Activated naive CD8-positive, alpha-beta T cell treated with anti-CD3 and anti-CD28 coated beads, Interleukin-2, amount 10 ng/mL, durations not matched to agents 7 days and 5 days (primary cell): ENCODE measurements at regions of chr11 and their contacts with region 1.

Region 1: GRCh38 chr11:68038718-68039525 is at the start of gene TCIRG1:
- DNase-seq: peak; percentile 77
- ATAC-seq: peak; percentile 54
- H3K4me3 Mint-ChIP-seq: peak within 1 kb of the TSS; percentile 97
- H3K27ac Mint-ChIP-seq: peak within 1 kb of the TSS; percentile 97
- H3K4me1 Mint-ChIP-seq: peaks cover 20% of the 10 kb centered on the region
- H3K27me3 Mint-ChIP-seq: no peaks in the 10 kb centered on the region
- total RNA-seq, gene TCIRG1: 297 to 308 TPM

Region 2: DNA sequence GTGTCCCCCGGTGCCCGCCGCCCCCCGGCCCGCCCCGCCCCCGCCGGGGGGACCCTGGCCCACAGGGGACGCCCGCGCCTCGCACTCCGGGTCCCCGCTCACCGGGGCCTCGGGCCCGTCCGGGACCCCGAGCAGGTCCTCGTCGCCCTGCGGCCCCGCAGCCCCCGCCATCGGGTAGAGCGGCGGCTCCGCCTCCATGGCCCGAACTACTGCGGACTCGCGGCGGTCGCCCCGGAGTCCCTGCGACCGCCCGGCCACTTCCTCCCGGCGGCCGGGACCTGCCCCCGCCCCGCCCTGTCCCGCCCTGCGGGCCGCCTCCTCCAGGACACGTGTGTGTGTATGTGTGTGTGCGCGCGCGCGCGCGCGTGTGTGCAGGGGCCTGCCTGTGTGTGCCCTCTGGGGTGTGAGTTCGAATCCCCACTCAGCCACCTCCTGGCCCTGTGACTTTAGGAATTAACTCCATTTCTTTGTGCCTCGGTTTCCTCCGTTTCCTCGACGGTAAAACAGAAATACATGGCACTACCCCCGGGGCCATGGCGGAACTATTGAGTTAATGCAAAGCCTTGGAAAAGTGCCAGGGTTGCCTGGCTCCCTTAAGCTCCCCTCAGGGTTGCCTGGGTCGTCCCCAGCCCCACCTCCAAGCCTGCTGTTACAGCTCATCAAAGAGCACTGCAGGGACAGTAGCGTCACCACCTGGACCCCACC is 34.9 kb before region 1 on chr11 and contains the start of gene UNC93B1:
- POLR2A ChIA-PET with region 1: interaction called, 12 read pairs
- DNase-seq: peak; percentile 90
- ATAC-seq: peak; percentile 88
- H3K4me3 Mint-ChIP-seq: peak within 1 kb of the TSS; percentile 89
- H3K27ac Mint-ChIP-seq: peak within 1 kb of the TSS; percentile 86
- H3K4me1 Mint-ChIP-seq: peaks cover 25% of the 10 kb centered on the region
- H3K27me3 Mint-ChIP-seq: no peaks in the 10 kb centered on the region
- total RNA-seq, gene UNC93B1: 35.1 to 42.6 TPM

Region 3: GRCh38 chr11:68051191-68052144 is 12.5 kb after region 1 on chr11:
- POLR2A ChIA-PET with region 1: interaction called, 10 read pairs
- DNase-seq: no peak
- ATAC-seq: no peak
- H3K4me3 Mint-ChIP-seq: no peak overlapping the region
- H3K27ac Mint-ChIP-seq: peak overlapping the region; percentile 15
- H3K4me1 Mint-ChIP-seq: no peaks in the 10 kb centered on the region
- H3K27me3 Mint-ChIP-seq: no peaks in the 10 kb centered on the region

Region 4: GRCh38 chr11:68076371-68077042 is 37.6 kb after region 1 on chr11:
- POLR2A ChIA-PET with region 1: no interaction called
- DNase-seq: no peak
- ATAC-seq: no peak
- H3K4me3 Mint-ChIP-seq: no peak overlapping the region
- H3K27ac Mint-ChIP-seq: no peak overlapping the region
- H3K4me1 Mint-ChIP-seq: no peaks in the 10 kb centered on the region
- H3K27me3 Mint-ChIP-seq: no peaks in the 10 kb centered on the region

Region 5: DNA sequence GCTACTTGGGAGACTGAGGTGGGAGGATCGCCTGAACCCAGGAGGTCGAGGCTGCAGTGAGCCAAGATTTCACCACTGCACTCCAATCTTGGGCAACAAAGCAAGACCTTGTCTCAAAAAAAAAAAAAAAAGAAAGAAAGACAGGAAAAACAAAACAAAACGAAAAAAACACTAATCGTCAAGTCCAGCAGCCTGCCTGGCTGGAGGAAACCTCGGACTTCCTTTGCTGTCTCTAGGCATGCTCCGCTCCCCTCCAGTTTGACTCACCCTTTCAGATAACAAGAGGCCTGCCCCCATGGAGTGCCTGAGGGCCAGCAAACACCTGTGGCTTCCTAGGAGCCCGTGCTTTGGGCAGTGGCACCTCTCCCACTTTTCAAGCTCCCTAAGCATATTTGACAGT is 111.1 kb after region 1 on chr11:
- POLR2A ChIA-PET with region 1: no interaction called
- DNase-seq: no peak
- ATAC-seq: no peak
- H3K4me3 Mint-ChIP-seq: no peak overlapping the region
- H3K27ac Mint-ChIP-seq: no peak overlapping the region
- H3K4me1 Mint-ChIP-seq: peaks cover 3% of the 10 kb centered on the region
- H3K27me3 Mint-ChIP-seq: peaks cover 2% of the 10 kb centered on the region